ENCODE measurements at regions of chr12 and their contacts with region 1.

Region 1: DNA sequence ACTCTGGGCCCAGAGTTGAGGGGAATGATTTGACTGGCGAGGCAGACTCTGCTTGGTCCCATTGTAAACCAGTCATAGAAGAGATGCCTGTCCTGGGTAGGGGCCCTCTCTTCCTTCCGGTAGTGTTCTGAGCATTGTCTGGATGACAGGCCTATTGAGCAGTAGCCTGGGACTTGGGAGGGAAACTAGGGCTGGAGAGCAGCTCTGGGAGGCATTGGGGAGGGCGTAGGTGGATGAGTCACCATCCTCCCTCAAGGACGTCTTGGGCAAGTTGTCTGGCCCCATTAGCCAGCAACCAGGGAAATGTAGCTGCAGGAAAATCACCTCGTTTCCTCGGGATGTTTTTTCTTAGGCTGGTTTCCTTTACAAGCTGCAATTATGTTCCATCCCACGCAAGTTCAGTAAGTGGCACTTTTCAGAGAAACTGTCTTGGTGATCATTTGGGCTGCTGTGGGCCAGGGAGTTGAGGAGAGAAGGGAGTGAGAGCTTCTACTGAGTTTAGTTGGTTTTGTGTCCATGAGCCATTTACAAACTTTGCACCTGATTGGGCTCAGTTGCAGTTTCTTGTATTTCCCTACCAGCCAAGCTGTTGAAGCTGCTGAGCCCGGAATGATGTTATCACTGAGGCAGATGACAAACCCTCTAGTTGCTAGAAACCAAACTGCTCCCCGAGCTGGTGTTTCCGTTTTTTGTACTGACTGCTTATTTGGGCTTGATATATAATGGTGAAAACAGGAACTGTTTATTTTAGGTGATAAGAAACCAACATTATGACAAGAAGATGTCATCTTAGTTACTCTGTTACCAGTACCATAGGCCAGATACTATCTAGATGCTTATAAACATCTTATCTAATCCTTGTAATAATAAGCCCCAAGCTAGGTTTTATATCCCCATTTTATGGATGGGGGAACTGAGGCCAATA is 147.6 kb downstream of the CHST11 start:
- DNase-seq: peak; percentile 94 to 95
- ATAC-seq: peak; percentile 89 to 94
- H3K4me3 ChIP-seq: peak overlapping the region; percentile 16; the same call in 1 of the 3 replicates
- H3K27ac ChIP-seq: peak overlapping the region; percentile 89 to 91
- H3K4me1 ChIP-seq: peaks cover 70% of the 10 kb centered on the region
- CTCF ChIP-seq: no peak
- EP300 ChIP-seq: no peak; a peak in 1 of 5 replicates
- POLR2A ChIP-seq: no peak
- RAD21 ChIP-seq: peak; percentile 3 to 24; a peak in 3 of 5 replicates

Region 2: DNA sequence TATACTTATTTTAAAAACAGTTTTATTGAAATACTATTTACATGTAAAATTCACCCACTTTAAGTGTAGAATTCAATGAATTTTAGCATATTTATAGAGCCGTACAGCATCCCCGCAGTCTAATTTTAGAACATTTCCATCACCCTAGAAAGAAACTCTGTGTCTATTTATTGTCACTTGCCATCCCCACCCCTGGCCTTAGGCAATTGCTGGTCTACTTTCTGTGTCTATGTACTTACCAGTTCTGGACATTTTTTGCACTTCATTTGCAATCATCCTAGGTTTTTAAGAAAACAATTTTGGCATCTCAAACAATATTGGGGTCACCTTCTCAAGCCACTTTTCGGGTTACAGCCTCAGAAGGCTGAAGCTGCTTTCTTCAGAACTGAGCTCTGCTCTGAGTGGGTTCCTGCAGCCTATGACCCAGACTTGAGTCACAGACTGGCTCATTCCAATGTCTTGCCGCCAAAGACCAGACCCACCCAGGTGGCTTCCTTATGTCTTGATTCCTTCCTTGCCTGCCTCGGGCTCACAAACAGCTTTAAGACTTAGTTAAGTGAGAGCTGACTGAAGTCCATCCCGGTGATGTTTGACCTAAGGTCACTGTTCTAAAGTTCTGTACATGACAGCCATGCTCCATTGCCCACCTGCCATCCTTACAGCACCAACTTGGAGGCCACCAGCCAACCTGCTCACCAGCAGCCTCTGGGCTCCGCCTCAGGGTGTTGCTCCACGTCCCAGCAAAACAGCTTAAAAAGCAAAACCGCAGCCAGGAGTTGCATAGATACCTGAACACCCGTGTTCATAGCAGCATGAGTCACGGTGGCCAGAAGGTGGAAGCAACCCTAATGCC is 16.0 kb before region 1 on chr12:
- CTCF ChIA-PET with region 1: interaction called, 4 read pairs
- POLR2A ChIA-PET with region 1: interaction called, 16 read pairs
- DNase-seq: peak; percentile 68 to 86
- ATAC-seq: peak; percentile 89 to 93
- H3K4me3 ChIP-seq: peak overlapping the region; percentile 23
- H3K27ac ChIP-seq: peak overlapping the region; percentile 80 to 88
- H3K4me1 ChIP-seq: peaks cover 57% of the 10 kb centered on the region
- CTCF ChIP-seq: no peak
- EP300 ChIP-seq: peak; percentile 50 to 63; a peak in 3 of 5 replicates
- POLR2A ChIP-seq: no peak
- RAD21 ChIP-seq: peak in 1 of 2 experiments; percentile 15; a peak in 2 of 5 replicates

Region 3: DNA sequence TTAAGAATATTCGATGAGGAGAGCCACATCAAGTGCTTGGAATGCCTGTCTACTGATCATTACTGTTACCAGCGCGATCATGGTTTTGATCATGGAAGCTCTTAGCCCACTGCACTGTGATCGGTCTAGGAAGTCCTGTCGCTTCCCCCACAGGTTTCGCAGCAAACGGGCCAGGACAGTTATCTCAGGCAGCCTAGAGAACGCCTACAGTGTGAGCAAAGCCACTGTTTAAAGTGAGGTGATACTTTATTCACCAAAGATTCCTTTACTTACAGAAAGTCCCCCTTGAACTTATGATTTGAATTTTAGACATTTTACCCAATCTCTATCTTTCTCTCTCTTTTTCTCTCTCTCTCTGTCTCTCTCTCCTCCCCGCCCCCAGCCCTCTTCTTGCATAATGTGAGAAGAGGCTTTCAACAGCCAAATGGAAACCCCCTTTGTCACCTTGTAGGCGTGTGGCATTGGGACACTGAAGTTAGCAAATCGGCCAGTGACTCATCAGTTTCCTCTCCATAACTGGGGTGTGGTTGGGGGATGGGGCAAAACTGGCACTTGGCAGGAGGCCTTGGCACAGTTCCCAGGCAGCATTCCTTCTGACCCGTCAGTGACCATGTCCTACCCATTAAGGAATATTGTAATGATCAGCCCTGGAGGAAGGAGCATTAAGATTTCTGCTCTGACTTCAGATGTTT is 67.2 kb after region 1 on chr12:
- CTCF ChIA-PET with region 1: interaction called, 3 read pairs
- POLR2A ChIA-PET with region 1: interaction called, 10 read pairs
- DNase-seq: peak; percentile 89 to 99
- ATAC-seq: peak; percentile 73 to 74
- H3K4me3 ChIP-seq: peak overlapping the region; percentile 5; the same call in 1 of the 3 replicates
- H3K27ac ChIP-seq: peak overlapping the region; percentile 84 to 93
- H3K4me1 ChIP-seq: peaks cover 56% of the 10 kb centered on the region
- CTCF ChIP-seq: no peak
- EP300 ChIP-seq: peak; percentile 91 to 97; a peak in 4 of 5 replicates
- POLR2A ChIP-seq: no peak
- RAD21 ChIP-seq: peak; percentile 33 to 59; a peak in 3 of 5 replicates

Measured in A549 (cell line).